Motor neuron (in vitro differentiated cells): ENCODE measurements at regions of chr18 and their contacts with region 1.

Region 1: DNA sequence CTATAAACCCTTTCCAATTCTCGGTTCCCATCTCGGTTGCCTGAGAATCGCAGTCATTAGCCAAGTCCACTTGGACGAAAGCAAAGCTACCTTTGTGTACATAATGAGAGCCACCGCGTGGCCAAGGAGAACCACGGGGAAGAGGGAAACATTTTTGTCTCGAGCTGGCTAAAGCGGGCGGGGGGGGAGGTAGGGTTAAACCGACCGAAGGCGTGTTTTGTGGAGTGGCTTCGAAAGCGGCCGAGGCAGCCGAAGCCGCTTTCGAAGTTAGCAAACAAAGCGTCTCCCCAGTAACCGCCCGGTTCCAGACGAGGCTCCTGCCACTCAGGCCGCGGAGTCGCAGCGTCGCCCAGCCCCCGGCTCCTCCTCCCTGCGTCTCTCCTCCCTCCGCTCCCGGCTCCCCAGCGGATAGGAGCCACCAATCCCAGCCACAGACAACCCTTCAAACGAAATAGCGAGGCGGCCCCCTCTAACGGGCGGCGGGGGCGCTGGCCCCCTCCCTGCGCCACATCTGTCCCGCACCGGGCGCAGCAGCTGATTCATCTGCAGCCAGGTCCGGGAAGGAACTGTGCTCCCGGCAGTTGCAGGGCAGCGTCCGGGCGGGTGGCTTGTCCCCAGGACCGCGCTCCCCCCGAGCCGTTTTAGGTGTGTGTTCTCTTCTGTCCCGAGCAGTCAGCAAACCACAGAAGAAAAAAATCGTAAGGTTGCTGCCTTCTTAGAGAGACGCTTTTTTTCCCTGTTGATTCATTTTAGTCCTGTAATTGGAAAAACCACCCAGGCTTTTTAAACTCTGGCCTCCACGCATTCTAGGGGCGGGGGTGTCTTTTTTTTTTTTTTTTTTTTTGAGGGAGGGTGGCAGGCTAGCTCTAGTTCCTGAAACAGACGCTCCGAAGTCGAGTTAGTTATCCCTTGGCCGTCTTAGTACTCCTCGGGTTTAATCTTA is 1.8 kb upstream of the TGIF1 start:
- ATAC-seq: peak; percentile 57 to 88 (median 85)
- H3K4me3 ChIP-seq: peak overlapping the region; percentile 60 to 79 (median 70)
- H3K27ac ChIP-seq: peak overlapping the region; percentile 78 to 91
- H3K4me1 ChIP-seq: peaks cover 8% of the 10 kb centered on the region in 2 donors

Region 2: DNA sequence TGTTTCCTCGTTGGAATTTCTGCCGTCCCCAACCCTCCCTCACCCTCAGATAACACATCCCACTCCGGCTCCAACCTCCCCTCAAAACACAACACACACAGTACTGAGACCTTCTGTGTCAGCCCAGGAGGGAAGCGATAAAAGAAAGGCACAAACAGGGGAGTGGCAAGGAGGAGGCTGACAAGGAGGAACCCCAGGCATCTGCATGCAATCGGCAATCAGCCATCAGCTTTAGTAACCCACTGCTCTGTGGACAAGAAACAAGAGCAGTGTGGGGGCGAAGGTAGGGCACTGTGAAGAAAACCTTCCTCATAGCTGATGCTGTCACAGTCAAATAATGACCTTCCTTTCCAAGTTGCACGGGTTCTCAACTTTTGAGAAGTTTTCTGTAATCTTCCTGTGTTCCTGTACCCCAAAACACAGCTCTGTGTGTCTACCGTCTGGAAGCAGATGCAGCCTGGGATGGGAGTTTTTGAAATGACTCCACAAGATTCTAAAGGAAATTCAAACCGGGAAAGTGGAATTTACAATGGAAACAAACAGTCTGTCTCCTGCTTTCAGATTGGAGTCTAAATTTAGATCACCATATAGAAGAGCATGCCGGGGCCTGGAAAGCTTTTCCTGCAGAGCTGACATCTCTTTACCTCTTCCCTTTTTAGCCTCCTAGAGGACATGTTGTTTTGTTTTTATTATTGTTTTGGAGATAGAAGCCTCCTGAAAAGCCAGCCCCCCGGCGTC is 418.8 kb before region 1 on chr18:
- in situ Hi-C with region 1: no loop called
- ATAC-seq: peak in 2 of 8 experiments; percentile 25 to 73
- H3K4me3 ChIP-seq: no peak overlapping the region
- H3K27ac ChIP-seq: no peak overlapping the region
- H3K4me1 ChIP-seq: peaks cover 17 to 33% of the 10 kb centered on the region in 2 donors

Region 3: DNA sequence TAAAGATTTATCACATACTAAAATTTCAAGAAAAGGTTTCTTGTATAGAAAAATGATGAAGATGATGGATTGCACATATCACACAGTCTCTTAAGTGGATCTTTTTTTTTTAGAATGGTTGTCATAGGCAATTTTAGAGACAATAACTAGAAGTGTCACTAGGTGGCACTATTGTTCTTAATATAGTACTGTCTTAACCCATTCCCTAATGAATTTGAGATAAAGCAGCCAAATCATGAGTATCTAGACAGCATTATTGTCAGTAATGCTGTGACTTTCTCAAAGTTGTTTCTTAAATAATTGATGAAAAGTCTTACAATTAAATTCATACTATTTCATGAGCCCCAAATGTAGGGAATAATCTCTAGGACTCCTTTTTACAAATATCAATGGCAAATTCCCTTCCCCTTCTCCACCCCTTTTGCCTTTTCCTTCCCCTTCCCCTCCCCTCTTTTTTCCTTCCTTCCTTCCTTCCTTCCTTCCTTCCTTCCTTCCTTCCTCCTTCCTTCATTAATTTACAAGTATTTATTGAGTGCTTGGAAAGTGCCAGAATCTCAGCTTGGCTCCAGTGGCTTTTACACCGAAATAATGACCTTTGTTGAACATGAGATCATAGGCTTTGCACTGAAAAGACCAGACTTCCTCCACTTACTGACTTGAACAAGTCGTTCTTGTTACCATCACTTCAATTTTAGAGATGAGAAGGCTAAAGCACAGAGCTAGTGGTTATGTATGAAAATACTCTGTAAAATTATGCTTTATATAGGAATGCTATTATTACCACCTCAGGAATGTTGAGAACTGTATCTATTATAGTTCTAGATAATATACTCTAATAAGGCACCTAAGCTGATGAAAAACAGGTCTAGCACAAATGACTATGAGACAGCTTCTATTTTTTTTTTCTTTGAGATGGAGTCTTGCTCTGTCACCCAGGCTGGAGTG is 166.4 kb before region 1 on chr18:
- in situ Hi-C with region 1: loop called in 3 of 9 experiments (anchors 10 to 25 kb)
- ATAC-seq: peak; percentile 72 to 87 (median 79)
- H3K4me3 ChIP-seq: no peak overlapping the region
- H3K27ac ChIP-seq: no peak overlapping the region
- H3K4me1 ChIP-seq: peaks cover 5 to 6% of the 10 kb centered on the region in 2 donors

Region 4: GRCh38 chr18:3297025-3297984 is 150.9 kb before region 1 on chr18:
- in situ Hi-C with region 1: loop called in 2 of 9 experiments (anchors 25 kb)
- ATAC-seq: peak in 6 of 8 experiments; percentile 89 to 99 (median 94)
- H3K4me3 ChIP-seq: peak overlapping the region; percentile 1 to 43 (median 26)
- H3K27ac ChIP-seq: no peak overlapping the region
- H3K4me1 ChIP-seq: no peaks in the 10 kb centered on the region

Region 5: GRCh38 chr18:3593904-3594661 is 145.9 kb after region 1 on chr18:
- in situ Hi-C with region 1: loop called in 3 of 9 experiments (anchors 25 kb)
- ATAC-seq: peak; percentile 64 to 90 (median 86)
- H3K4me3 ChIP-seq: peak overlapping the region; percentile 30 to 46 (median 38)
- H3K27ac ChIP-seq: peak overlapping the region; percentile 83 to 96
- H3K4me1 ChIP-seq: peaks cover 34 to 40% of the 10 kb centered on the region in 2 donors